ENCODE measurements at regions of chr13 and their contacts with region 1.

Region 1: GRCh38 chr13:90867336-90867683 is 480.2 kb upstream of the MIR17HG start:
- DNase-seq: peak; percentile 62
- H3K4me3 ChIP-seq: no peak overlapping the region
- H3K27ac ChIP-seq: no peak overlapping the region
- H3K4me1 ChIP-seq: no peaks in the 10 kb centered on the region
- H3K27me3 ChIP-seq: peaks cover 1% of the 10 kb centered on the region
- CTCF ChIP-seq: peak; percentile 81 to 84

Region 2: DNA sequence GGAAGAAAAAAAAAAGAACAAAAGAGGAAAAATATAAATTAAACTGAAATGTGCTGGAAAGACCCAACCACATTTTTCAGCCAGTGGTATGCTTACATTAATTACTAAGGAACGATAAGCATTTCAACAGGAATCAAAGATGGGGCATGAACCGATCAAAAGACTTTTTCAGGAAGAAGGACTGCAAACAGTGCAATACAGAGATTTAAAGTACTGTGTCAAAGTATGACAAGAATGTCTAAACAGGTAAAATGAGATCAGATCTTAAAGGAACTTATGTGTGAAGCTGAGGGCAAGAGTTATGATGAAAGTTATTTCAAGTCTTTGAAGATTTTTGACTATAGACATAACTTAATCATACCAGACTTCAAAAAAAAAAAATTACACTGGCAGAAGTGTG is 1434.3 kb before region 1 on chr13:
- CTCF ChIA-PET with region 1: no interaction called
- dilution Hi-C with region 1: no loop called
- in situ Hi-C with region 1: no loop called
- intact Hi-C with region 1: loop called (anchors 10 kb)
- DNase-seq: no peak
- H3K4me3 ChIP-seq: no peak overlapping the region
- H3K27ac ChIP-seq: no peak overlapping the region
- H3K4me1 ChIP-seq: no peaks in the 10 kb centered on the region
- H3K27me3 ChIP-seq: no peaks in the 10 kb centered on the region
- CTCF ChIP-seq: no peak

Region 3: GRCh38 chr13:89925107-89925506 is 942.2 kb before region 1 on chr13:
- CTCF ChIA-PET with region 1: no interaction called
- dilution Hi-C with region 1: no loop called
- in situ Hi-C with region 1: no loop called
- intact Hi-C with region 1: loop called (anchors 10 kb)
- DNase-seq: peak; percentile 45
- H3K4me3 ChIP-seq: no peak overlapping the region
- H3K27ac ChIP-seq: no peak overlapping the region
- H3K4me1 ChIP-seq: peaks cover 6% of the 10 kb centered on the region
- H3K27me3 ChIP-seq: no peaks in the 10 kb centered on the region
- CTCF ChIP-seq: peak; percentile 58 to 78

Region 4: DNA sequence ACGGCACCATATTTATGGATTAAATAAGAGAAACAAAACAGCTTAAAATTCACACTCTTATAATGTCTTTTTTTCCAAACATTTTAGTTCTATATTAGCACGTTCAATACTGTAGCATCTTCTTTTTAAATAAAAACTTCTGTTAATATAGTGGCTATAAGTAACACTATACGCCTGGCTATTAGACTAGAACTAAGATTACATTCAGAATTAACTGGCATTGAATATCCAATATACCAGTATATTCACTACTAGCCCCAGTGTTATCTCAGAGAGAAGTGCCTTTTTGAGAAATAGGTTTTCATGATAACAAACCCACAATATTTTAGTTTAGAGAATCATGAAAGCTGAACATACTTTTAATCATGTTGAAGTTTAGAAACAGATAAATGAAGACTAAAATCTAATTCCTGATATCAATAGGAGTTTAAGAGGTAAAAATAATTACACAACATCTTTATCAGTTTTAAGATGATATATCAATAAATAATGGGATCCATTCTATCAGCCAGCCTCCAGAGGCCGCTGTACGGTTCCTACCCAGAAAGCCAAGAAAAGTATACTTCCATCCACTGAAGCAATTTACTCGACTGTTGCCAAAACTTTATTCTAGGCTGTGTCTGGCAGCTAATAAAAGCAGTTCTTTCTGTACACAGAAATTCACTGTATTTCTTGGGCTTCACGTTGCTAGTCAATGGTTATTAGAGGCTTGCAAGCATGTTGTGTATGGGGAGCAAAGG is 633.2 kb before region 1 on chr13:
- CTCF ChIA-PET with region 1: no interaction called
- dilution Hi-C with region 1: no loop called
- in situ Hi-C with region 1: no loop called
- intact Hi-C with region 1: loop called (anchors 2 kb)
- DNase-seq: no peak
- H3K4me3 ChIP-seq: no peak overlapping the region
- H3K27ac ChIP-seq: no peak overlapping the region
- H3K4me1 ChIP-seq: peaks cover 3% of the 10 kb centered on the region
- H3K27me3 ChIP-seq: no peaks in the 10 kb centered on the region
- CTCF ChIP-seq: peak; percentile 24 to 39

Region 5: GRCh38 chr13:90455823-90456222 is 411.5 kb before region 1 on chr13:
- CTCF ChIA-PET with region 1: no interaction called
- dilution Hi-C with region 1: no loop called
- in situ Hi-C with region 1: loop called in 1 of 2 experiments (anchors 25 kb)
- intact Hi-C with region 1: loop called (anchors 1 kb)
- DNase-seq: no peak
- H3K4me3 ChIP-seq: no peak overlapping the region
- H3K27ac ChIP-seq: no peak overlapping the region
- H3K4me1 ChIP-seq: no peaks in the 10 kb centered on the region
- H3K27me3 ChIP-seq: no peaks in the 10 kb centered on the region
- CTCF ChIP-seq: no peak

Region 6: DNA sequence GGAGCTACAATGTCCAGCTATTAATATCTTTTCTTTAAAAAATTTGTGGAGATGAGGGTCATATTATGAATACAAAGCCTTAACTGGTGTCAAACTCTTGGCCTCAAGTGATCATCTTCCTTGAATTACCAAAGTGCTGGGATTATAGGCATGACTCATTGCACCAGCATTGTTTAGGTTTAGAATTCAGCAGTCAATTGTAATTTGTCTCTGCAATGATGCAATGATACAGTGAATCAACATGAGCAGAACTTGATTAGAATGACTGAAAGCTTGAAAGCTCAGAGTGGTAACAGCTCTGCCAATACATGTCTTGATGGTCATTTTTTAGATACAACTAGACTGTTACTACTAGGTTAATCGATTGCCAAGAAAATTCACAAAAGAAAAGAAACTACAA is 272.6 kb before region 1 on chr13:
- CTCF ChIA-PET with region 1: interaction called, 5 read pairs
- dilution Hi-C with region 1: no loop called
- in situ Hi-C with region 1: no loop called
- intact Hi-C with region 1: loop called (anchors 1 kb)
- DNase-seq: peak; percentile 86
- H3K4me3 ChIP-seq: no peak overlapping the region
- H3K27ac ChIP-seq: no peak overlapping the region
- H3K4me1 ChIP-seq: peaks cover 7% of the 10 kb centered on the region
- H3K27me3 ChIP-seq: no peaks in the 10 kb centered on the region
- CTCF ChIP-seq: no peak

Region 7: DNA sequence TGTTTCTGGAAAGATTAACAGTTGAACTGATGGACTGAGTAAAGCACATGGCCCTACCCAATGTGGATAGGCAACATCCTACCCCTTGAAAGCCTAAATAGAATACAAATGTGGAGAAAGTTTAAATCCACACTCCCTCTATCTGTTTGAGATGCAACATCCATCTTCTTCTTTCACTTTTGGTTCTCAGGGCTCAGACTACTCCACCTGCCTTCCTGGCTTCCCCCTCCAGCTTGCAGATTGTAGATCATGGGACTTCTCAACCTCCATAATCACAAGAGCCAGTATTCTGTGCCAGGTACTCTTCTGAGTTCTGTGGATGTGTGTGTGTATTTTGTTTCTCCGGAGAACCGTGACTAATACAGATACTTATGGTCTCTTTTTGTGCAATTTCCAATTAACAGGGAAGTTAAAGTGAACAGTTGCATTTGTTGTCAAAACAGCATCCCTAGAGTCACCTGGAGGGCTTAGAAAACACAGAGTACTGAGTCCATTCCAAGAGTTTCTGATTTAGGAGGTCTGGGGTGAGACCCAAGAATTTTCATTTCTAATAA is 110.1 kb before region 1 on chr13:
- CTCF ChIA-PET with region 1: no interaction called
- dilution Hi-C with region 1: no loop called
- in situ Hi-C with region 1: no loop called
- intact Hi-C with region 1: no loop called
- DNase-seq: peak; percentile 1
- H3K4me3 ChIP-seq: no peak overlapping the region
- H3K27ac ChIP-seq: no peak overlapping the region
- H3K4me1 ChIP-seq: no peaks in the 10 kb centered on the region
- H3K27me3 ChIP-seq: no peaks in the 10 kb centered on the region
- CTCF ChIP-seq: no peak